Naive thymus-derived CD4-positive, alpha-beta T cell (primary cell): ENCODE measurements at regions of chr11 and their contacts with region 1.

Region 1: DNA sequence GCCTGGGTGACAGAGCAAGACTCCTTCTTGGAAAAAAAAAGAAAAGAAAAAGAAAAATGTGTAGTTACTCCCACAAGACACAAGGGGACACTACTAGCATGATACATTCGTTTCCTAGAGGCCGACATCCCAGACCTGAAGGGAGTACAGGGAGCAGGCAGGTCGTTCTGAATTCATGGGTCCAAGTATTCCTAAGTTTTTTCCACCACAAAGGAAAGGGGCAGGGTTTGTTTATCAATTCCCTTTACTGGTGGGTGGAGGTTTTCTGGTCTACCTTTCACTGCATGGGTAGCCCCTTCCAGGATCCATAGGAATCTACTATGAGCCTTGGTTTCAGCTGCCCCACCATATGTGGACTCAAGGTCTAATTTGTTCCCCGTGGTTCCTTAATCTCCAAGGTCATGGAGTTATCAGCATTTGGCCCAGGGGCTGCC is 11.8 kb downstream of the TIGD3 start:
- DNase-seq: peak in 7 of 9 donors; percentile 47 to 71 (median 59)
- ATAC-seq: peak; percentile 82
- H3K4me3 ChIP-seq: no peak overlapping the region
- H3K4me3 Mint-ChIP-seq: no peak overlapping the region
- H3K27ac ChIP-seq: no peak overlapping the region
- H3K27ac Mint-ChIP-seq: no peak overlapping the region
- H3K4me1 ChIP-seq: no peaks in the 10 kb centered on the region
- H3K4me1 Mint-ChIP-seq: peaks cover 0 to 9% (median 0%) of the 10 kb centered on the region in 7 donors
- H3K27me3 ChIP-seq: no peaks in the 10 kb centered on the region
- H3K27me3 Mint-ChIP-seq: no peaks in the 10 kb centered on the region

Region 2: DNA sequence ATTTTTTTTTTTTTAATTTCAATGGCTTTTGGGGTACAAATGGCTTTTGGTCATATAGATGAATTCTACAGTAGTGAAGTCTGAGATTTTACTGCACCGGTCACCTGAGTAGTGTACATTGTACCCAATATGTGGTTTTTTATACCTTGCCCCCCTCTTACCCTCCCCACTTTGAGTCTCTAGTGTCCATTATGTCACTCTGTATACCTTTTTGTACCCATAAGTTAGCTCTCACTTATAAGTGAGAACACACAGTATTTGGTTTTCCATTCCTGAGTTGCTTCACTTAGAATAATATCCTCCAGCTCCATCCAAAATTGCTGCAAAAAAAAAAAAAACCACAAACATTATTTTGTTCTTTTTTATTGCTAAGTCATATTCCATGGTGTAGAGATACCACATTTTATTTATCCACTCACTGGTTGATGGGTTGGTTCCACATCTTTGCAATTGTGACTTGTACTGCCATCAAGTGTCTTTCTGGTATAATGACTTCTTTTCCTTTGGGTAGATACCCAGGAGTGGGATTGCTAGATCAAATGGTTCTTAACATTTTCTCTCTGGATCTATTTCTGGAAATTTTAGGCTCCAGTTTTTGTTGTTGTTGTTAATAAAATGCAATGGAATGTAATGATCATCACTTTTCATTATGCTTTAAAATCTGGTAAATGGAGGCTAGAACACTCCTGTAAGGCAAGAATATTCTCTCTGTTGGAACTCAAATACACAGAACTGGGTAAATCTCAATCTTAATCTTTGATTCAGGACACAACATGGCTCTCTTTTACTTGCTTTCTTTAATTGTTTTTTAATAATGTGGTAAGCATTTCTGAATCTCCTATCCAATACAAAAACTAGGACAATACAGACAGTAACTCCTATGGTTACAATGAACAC is 66.6 kb after region 1 on chr11:
- CTCF ChIA-PET with region 1: no interaction called
- POLR2A ChIA-PET with region 1: no interaction called
- intact Hi-C with region 1: loop called in 1 of 2 experiments (anchors 1 kb)
- DNase-seq: peak in 7 of 9 donors; percentile 49 to 76 (median 62)
- ATAC-seq: peak; percentile 36
- H3K4me3 ChIP-seq: no peak overlapping the region
- H3K4me3 Mint-ChIP-seq: peak overlapping the region in 6 of 10 donors; percentile 25 to 94 (median 48)
- H3K27ac ChIP-seq: no peak overlapping the region
- H3K27ac Mint-ChIP-seq: peak overlapping the region; percentile 69 to 100 (median 87)
- H3K4me1 ChIP-seq: peaks cover 47 to 51% of the 10 kb centered on the region in 2 donors
- H3K4me1 Mint-ChIP-seq: peaks cover 55 to 89% (median 81%) of the 10 kb centered on the region in 7 donors
- H3K27me3 ChIP-seq: no peaks in the 10 kb centered on the region
- H3K27me3 Mint-ChIP-seq: no peaks in the 10 kb centered on the region